ENCODE measurements at regions of chr20 and their contacts with region 1.

Region 1: GRCh38 chr20:51372176-51372803 is 170.2 kb downstream of the NFATC2 start:
- DNase-seq: peak; percentile 49
- ATAC-seq: peak; percentile 99
- H3K4me3 ChIP-seq: no peak overlapping the region
- H3K27ac ChIP-seq: no peak overlapping the region
- H3K4me1 ChIP-seq: peaks cover 0 to 7% of the 10 kb centered on the region in 2 experiments; a peak in 1 of 4 replicates
- H3K27me3 ChIP-seq: no peaks in the 10 kb centered on the region
- CTCF ChIP-seq: peak; percentile 71 to 88 (median 79); a peak in 5 of 6 replicates
- POLR2A ChIP-seq: no peak
- RAD21 ChIP-seq: peak; percentile 91

Region 2: GRCh38 chr20:51624157-51624731 is 252.0 kb after region 1 on chr20:
- CTCF ChIA-PET with region 1: interaction called, 7 read pairs
- POLR2A ChIA-PET with region 1: no interaction called
- RAD21 ChIA-PET with region 1: interaction called, 3 to 4 read pairs
- intact Hi-C with region 1: loop called (anchors 1 kb)
- DNase-seq: peak; percentile 61
- ATAC-seq: peak; percentile 90
- H3K4me3 ChIP-seq: no peak overlapping the region
- H3K27ac ChIP-seq: no peak overlapping the region
- H3K4me1 ChIP-seq: peaks cover 7 to 13% of the 10 kb centered on the region in 2 experiments
- H3K27me3 ChIP-seq: no peaks in the 10 kb centered on the region
- CTCF ChIP-seq: peak; percentile 76 to 89 (median 77)
- POLR2A ChIP-seq: no peak
- RAD21 ChIP-seq: peak; percentile 72

Measured in HCT116 (cell line).